ENCODE measurements at regions of chr11 and their contacts with region 1.

Region 1: GRCh38 chr11:45110562-45110961 is 35.9 kb upstream of the PRDM11 start:
- H3K4me3 ChIP-seq: no peak overlapping the region
- H3K27ac ChIP-seq: no peak overlapping the region
- H3K4me1 ChIP-seq: no peaks in the 10 kb centered on the region
- CTCF ChIP-seq: peak; percentile 26; the same call in 1 of the 2 replicates

Region 2: GRCh38 chr11:45180843-45181266 is 70.3 kb after region 1 on chr11:
- CTCF ChIA-PET with region 1: interaction called, 14 read pairs
- POLR2A ChIA-PET with region 1: no interaction called
- H3K4me3 ChIP-seq: peak overlapping the region; percentile 40
- H3K27ac ChIP-seq: peak overlapping the region; percentile 56; the same call in 1 of the 2 replicates
- H3K4me1 ChIP-seq: no peaks in the 10 kb centered on the region
- CTCF ChIP-seq: peak; percentile 53

Region 3: DNA sequence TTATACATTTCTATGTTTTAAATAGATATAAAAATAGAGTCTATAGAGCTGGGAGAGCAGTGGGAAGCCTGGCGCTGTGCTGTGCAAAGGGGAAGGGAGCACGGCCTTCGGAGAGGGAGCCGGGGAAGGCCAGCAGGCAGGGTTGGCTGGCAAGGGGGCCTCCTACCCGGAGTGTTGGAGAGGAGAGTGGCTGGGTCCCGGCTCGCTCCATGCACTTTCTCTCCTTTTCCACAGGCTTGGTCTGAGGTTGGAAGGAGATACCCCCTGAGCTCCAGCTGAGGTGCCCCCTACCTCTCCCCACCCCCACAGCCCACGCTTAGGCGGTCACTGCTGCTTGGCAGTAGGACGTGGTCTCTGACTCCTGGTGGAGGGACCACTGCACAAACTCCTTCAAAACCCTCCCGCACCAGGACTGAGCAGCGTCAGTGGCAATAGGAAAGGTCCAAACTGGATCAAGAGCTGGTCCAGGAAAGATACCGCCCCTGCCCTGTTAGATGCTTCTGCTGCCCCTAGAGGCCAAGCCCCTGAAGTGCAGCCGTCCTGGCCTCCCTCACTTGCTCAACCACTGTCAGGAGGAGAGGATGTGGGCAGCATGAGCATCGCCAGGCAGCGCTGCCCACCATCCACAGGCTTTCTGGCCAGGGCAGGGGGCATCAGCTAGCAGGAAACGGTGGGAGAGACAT is 122.7 kb after region 1 on chr11:
- CTCF ChIA-PET with region 1: interaction called, 17 read pairs
- POLR2A ChIA-PET with region 1: no interaction called
- H3K4me3 ChIP-seq: no peak overlapping the region
- H3K27ac ChIP-seq: no peak overlapping the region
- H3K4me1 ChIP-seq: no peaks in the 10 kb centered on the region
- CTCF ChIP-seq: peak; percentile 41; the same call in 1 of the 2 replicates

Region 4: DNA sequence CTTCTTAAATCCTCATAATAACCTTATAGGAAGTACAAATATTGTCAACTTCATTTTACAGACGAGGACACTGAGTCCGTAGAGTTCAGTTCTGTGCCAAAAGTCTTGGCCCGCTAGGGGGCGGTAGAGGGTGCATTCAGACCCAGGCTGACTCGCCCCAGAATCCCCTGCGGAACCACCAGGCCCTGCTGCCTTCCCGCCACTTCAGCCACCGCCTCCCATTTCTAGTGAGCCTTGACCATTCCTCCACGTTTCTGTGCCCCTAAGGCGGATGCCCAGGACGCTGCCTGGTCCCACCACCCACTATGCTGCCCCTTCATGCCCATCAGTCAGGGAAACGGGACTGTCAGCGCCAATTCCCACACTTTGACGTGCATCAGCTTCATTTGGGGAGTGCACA is 156.5 kb after region 1 on chr11:
- CTCF ChIA-PET with region 1: interaction called, 10 read pairs
- POLR2A ChIA-PET with region 1: no interaction called
- H3K4me3 ChIP-seq: no peak overlapping the region
- H3K27ac ChIP-seq: no peak overlapping the region
- H3K4me1 ChIP-seq: no peaks in the 10 kb centered on the region
- CTCF ChIP-seq: no peak; the same call in 1 of the 2 replicates

Region 5: GRCh38 chr11:45294499-45294898 is 183.9 kb after region 1 on chr11:
- CTCF ChIA-PET with region 1: interaction called, 77 read pairs
- POLR2A ChIA-PET with region 1: no interaction called
- H3K4me3 ChIP-seq: no peak overlapping the region
- H3K27ac ChIP-seq: no peak overlapping the region
- H3K4me1 ChIP-seq: no peaks in the 10 kb centered on the region
- CTCF ChIP-seq: no peak

Region 6: GRCh38 chr11:45313171-45313865 is 202.8 kb after region 1 on chr11:
- CTCF ChIA-PET with region 1: interaction called, 14 read pairs
- POLR2A ChIA-PET with region 1: no interaction called
- H3K4me3 ChIP-seq: no peak overlapping the region
- H3K27ac ChIP-seq: no peak overlapping the region
- H3K4me1 ChIP-seq: no peaks in the 10 kb centered on the region
- CTCF ChIP-seq: no peak

Region 7: DNA sequence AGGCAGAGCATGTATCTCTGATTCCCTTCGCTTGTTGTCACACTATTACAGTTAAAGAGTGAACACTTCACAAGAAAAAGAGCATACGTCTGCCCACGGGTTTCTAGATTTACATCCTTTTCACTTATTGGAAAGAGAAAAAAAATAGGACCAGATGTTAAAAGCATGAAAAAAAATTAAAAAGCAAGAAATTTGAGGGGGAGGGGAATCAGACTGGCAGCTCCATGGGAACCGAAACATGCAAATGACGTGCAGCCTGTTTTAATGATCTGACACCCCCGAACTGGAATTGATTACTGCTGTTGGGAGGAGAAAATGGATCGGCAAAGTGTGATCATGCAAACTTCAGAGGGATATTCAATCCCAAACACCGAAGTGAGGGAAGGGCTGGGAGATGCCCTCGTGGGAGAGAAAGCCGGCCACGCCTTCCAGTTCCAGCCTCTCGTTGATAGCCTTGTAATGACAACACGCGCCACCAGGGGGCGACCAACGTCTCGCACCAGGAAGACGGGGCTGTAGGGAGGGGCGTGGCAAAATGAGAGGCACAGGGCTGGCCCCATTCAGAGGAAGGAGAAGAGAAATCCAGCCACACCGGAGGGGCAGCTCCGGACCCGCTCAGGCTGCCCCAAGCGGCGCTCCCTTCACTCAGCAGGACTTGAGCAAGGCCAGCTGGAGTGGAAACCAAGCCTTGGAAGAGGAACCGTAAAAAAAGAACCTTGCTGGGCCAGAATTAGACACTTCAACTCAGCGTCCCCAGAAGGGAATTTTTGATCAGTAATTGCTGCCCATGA is 229.4 kb after region 1 on chr11:
- CTCF ChIA-PET with region 1: interaction called, 147 read pairs
- POLR2A ChIA-PET with region 1: interaction called, 3 read pairs
- H3K4me3 ChIP-seq: no peak overlapping the region
- H3K27ac ChIP-seq: no peak overlapping the region
- H3K4me1 ChIP-seq: no peaks in the 10 kb centered on the region
- CTCF ChIP-seq: peak; percentile 82

Measured in HEK293 (cell line).